ENCODE measurements at regions of chr12 and their contacts with region 1.

Region 1: DNA sequence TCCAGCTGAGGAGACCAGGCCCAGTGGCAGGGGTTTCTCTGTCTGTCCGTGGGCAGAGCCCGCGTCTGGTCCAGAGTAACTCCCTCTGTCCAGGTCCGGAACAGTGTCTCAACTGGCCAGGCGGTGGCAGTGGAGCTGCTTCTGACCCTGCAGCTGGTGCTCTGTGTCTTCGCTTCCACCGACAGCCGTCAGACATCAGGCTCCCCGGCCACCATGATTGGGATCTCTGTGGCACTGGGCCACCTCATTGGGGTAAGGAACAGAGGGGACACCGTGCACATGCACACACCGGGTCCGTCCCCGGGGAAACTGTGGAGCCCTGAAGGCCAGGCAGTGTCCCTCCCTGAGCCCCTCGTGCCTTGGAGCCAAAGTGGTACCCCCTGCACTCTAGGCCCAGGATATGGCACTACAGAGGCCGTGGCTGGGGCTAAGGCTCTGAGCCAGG is 1.5 kb downstream of the AQP6 start:
- DNase-seq: peak; percentile 65
- H3K4me3 ChIP-seq: no peak overlapping the region
- H3K27ac ChIP-seq: peak overlapping the region in 2 of 4 donors; percentile 32 to 68
- H3K4me1 ChIP-seq: peaks cover 0 to 14% (median 6%) of the 10 kb centered on the region in 4 donors
- H3K27me3 ChIP-seq: peaks cover 7% of the 10 kb centered on the region
- CTCF ChIP-seq: peak; percentile 41 to 58 (median 44)
- EP300 ChIP-seq: no peak
- POLR2A ChIP-seq: no peak

Region 2: DNA sequence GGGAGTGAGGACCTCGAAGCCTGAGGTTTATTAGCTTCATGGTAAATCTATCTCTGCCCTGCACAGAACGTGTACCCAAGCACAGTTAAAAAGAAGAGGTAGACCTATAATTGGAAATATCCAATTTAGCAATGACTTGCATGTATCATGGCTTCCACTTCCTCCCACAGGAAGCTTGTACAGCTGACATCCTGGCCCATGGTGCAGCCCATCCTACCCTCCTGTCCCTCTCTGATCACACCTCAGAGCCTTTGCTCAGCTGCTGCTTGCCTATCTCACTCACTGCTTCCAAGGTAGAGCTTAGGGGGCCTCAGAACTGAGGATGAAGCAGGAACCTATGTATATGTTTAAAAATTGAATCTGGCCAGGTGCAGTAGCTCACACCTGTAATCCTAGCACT is 127.1 kb before region 1 on chr12:
- in situ Hi-C with region 1: no loop called
- intact Hi-C with region 1: no loop called
- DNase-seq: no peak
- H3K4me3 ChIP-seq: no peak overlapping the region
- H3K27ac ChIP-seq: no peak overlapping the region
- H3K4me1 ChIP-seq: peaks cover 0 to 9% (median 6%) of the 10 kb centered on the region in 4 donors
- H3K27me3 ChIP-seq: peaks cover 28% of the 10 kb centered on the region
- CTCF ChIP-seq: no peak
- EP300 ChIP-seq: no peak
- POLR2A ChIP-seq: no peak

Region 3: DNA sequence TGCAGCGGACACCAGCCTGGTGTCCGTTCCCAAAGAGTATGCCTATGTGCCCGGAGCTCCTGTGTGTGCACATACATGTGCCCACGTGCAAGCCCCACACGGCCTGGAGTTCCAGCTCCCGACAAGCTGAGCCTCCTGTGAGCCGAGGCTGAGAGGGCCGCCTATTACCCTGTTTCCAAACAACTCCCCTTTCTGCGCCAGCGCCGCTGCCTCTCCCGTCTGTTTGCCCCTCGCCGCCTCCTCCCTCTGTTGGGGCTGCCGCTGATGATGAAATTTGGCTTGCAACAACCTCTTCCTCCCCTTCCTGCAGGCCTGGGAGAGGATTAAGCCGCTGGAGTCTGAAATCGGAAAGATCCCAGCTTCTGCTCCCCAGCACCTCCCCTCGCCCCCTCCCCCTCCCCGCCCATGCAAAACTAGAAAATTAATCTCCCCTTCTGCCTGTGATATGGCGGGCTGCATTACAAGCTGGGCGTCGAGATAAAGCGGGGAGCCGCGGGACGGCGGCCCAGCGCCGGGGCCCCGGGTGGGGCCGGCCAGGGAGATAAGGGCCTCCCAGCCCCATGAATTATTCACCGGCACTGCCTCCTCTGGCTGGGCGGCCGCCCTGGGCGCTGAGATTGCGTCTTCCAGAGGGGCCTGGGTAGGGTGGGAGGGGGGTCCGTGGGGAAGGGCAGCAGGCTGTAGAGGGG is 76.3 kb after region 1 on chr12:
- in situ Hi-C with region 1: loop called (anchors 5 to 10 kb)
- intact Hi-C with region 1: no loop called
- DNase-seq: peak; percentile 57
- H3K4me3 ChIP-seq: peak overlapping the region in 2 of 4 donors; percentile 11 to 27
- H3K27ac ChIP-seq: peak overlapping the region in 1 of 4 donors; percentile 30
- H3K4me1 ChIP-seq: peaks cover 5 to 11% (median 9%) of the 10 kb centered on the region in 4 donors
- H3K27me3 ChIP-seq: peaks cover 18% of the 10 kb centered on the region
- CTCF ChIP-seq: no peak
- EP300 ChIP-seq: no peak
- POLR2A ChIP-seq: no peak

Region 4: DNA sequence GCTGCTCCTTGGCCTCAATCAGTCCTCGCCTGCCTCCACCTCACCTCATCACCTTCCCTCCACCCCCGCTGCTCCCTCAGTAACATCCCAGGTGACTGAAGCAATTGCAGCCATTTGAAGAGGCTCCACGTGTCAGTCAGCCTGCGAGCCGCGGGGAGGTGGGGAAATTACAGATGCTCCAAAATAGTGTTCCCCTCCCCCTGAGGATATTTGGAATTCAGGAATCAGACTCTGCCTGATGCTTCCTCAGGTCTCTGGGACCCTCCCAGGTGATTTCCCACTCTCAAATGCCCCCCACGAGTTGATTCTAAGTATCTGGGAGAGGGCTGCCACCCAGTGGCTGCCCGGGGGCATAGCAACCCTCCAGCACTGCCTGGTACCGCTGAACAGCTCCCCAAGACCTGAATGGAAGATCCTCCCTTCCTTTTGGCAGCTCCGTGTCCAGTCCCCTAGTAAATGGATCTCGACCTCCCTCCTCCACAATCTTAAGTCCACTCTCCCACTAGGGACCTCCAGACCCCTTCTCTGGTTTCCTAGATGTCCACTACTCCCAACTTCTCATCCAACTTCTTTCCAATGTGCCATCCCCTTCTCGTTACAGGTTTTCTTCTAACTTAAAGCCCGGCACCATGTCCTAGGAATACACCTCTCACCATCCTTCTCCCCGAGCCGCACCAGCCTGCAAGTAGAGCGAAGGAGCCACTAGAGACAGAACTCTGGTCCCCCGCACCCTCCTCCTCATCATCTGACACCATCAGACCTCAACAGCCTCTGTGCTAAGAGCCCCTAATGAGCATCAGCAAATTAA is 81.8 kb after region 1 on chr12:
- in situ Hi-C with region 1: loop called (anchors 5 to 10 kb)
- intact Hi-C with region 1: loop called (anchors 2 kb)
- DNase-seq: peak; percentile 44
- H3K4me3 ChIP-seq: no peak overlapping the region
- H3K27ac ChIP-seq: no peak overlapping the region
- H3K4me1 ChIP-seq: peaks cover 0 to 26% (median 21%) of the 10 kb centered on the region in 4 donors
- H3K27me3 ChIP-seq: peaks cover 29% of the 10 kb centered on the region
- CTCF ChIP-seq: peak; percentile 85 to 98 (median 95)
- EP300 ChIP-seq: no peak
- POLR2A ChIP-seq: no peak